AG04449 (cell line): ENCODE measurements at regions of chr11 and their contacts with region 1.

Region 1: GRCh38 chr11:19712281-19713220 is at the start of gene NAV2:
- DNase-seq: no peak
- H3K4me3 ChIP-seq: peak within 1 kb of the TSS; percentile 80
- CTCF ChIP-seq: no peak

Region 2: GRCh38 chr11:19511413-19512183 is 201.0 kb before region 1 on chr11:
- CTCF ChIA-PET with region 1: no interaction called
- POLR2A ChIA-PET with region 1: no interaction called
- DNase-seq: no peak
- H3K4me3 ChIP-seq: no peak overlapping the region
- CTCF ChIP-seq: no peak

Region 3: DNA sequence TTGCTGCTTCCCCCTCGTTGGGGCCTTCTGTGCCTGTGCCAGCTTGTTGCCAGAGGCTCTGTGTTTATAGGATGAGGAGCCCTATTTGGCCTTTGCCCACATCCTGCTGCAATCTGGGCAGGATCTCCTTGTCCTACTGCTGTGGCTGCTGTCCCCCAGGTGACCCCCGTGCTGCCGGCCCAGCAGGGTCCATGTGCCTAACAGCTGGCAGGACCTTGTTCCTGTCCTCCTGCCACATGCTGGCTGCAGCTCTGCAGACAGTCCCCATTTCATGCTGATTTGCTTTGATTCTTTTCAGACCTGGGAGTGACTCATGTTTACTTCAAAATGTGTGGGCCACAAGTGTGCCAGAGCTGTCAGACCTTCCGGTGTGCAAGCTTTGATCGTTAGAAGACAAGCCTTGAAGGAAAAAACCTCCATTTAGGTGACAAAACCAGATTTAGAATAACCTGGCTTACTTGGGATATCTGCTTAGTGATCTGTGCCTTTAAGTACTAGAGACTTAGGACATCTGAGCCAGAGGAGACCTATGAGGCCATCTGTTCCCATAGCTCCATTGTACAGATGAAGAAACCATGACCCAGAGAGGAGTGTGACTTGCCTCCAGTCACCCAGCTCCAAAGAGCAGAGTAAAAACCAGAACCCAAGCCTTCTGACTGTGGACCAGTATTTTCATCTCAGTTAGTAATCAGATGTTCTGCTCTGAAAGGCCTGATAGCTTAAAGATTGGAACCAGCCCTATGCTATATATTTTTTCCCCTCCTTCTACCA is 11.2 kb after region 1 on chr11:
- CTCF ChIA-PET with region 1: interaction called, 14 read pairs
- POLR2A ChIA-PET with region 1: interaction called, 6 read pairs
- DNase-seq: no peak
- H3K4me3 ChIP-seq: no peak overlapping the region
- CTCF ChIP-seq: no peak

Region 4: DNA sequence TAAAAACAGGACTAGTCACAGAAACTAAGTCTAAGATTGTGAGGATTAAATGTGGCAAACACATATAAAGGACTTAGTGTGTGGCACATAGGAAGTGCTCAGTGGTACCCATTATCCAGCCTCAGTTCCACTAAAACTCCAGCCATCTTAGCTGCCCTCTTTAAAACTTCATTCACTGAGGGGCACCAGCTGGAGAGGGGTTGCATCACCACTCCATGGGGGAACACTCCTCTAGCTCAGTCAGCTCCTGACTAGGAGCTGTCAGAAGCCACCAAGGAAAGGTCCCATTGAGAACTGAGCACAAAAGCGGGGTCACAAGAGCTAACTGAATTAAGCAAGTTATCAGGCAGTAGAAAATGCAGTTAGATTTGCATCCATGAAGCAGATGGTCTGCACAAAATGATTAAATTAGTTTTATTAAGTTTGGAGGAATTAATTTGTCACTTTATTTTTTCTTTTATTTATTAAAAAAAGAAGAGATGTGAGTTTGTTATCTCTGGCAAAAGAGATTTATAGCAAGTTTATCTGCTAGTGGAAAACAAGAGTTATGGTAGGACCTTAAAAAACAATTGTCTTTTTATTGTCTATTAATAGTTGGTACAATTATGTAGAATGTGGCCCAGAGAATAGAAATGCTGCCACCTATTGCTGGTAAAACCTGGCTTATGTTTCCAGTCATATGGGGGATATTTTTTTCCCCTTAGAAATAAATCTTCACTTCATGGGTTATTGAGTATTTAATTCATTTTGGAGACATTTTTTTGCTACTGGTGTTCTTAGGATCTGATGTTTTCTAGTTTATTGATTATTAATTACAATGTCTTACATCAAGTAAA is 95.7 kb after region 1 on chr11:
- CTCF ChIA-PET with region 1: no interaction called
- POLR2A ChIA-PET with region 1: no interaction called
- DNase-seq: no peak
- H3K4me3 ChIP-seq: no peak overlapping the region
- CTCF ChIP-seq: peak; percentile 3

Region 5: DNA sequence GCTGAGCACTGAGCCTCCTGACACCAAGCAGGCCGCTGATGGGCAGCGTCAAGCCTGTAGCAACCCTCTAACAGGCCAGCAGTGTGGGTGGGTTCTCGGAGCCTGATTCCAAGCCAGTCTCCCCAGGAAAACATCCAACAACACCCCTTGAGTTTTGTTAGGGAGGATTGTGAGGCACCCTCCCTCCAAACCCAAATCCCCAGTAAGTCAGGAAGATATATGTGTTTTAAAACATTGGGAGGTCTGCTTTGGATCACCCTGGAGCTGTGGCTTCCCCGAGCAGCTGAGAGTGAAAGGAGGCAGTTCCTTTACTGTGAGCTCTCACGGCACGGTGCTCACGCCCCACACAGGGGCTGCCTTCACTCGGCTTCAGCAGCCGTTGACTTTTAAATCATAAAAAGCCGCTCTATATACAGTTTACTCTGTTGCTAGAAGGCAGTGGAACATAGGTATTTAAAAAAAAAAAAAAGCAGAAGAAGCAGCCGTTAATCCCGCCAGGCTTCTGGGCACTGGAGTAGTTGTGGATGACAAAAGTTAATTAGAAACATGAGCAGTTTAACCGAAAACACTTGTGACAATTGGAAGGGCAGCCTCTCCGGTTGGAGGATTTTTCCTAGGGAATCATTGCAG is 218.7 kb after region 1 on chr11:
- CTCF ChIA-PET with region 1: no interaction called
- POLR2A ChIA-PET with region 1: no interaction called
- DNase-seq: no peak
- H3K4me3 ChIP-seq: peak overlapping the region; percentile 54
- CTCF ChIP-seq: no peak